Activated T-helper 2 cell treated with anti-CD3 and anti-CD28 coated beads, Interferon-gamma antibody, Interleukin-2, Interleukin-4, amounts not matched to agents 10 μg/mL and 5 μg/mL and 100 μg/mL, durations not matched to agents 14 hours and 24 hours and 36 hours (primary cell): ENCODE measurements at regions of chr15 and their contacts with region 1.

Region 1: DNA sequence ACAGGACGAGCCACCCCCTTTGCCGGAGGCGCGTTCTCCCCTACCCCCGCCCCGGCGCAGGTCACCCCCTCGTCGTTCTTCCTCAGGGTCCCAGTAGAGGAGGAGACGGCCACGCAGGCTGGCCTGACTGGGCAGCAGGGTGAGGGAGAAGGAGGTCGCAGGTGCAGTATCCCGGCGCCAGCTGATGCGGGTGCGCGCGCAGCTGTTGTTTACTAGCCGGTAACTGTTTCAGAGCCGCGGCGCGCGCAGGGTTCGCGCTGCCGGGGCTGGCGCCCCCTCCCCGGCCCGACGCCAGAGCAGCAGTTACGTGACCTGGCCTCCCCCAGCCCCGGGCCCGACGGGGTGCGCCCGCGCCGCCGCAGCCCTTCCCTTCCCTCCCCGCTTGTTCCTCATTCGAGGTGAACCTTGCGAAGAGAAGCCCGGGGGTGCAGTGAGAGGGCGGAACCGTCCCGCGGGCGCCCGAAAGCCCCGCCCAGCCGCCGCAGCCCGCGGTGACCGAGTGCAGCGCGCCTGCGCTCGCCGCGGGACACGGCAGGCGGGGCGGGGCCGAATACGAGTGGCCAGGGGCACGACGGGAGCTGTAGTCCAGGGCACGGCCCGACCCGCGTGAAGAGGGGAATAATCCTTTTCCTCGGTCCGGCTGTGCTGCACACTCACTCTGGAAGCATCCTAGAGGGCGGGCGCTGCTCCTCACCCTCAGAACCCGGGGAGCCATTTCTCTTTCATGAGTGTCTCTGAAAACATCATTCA is at the start of gene SLC12A6:
- DNase-seq: peak; percentile 88
- H3K4me3 Mint-ChIP-seq: peak within 1 kb of the TSS; percentile 98
- H3K27ac Mint-ChIP-seq: peak within 1 kb of the TSS; percentile 95
- H3K4me1 Mint-ChIP-seq: peaks cover 56% of the 10 kb centered on the region
- H3K27me3 Mint-ChIP-seq: no peaks in the 10 kb centered on the region
- total RNA-seq, gene SLC12A6: 16.6 and 17.0 TPM in 2 replicates

Region 2: DNA sequence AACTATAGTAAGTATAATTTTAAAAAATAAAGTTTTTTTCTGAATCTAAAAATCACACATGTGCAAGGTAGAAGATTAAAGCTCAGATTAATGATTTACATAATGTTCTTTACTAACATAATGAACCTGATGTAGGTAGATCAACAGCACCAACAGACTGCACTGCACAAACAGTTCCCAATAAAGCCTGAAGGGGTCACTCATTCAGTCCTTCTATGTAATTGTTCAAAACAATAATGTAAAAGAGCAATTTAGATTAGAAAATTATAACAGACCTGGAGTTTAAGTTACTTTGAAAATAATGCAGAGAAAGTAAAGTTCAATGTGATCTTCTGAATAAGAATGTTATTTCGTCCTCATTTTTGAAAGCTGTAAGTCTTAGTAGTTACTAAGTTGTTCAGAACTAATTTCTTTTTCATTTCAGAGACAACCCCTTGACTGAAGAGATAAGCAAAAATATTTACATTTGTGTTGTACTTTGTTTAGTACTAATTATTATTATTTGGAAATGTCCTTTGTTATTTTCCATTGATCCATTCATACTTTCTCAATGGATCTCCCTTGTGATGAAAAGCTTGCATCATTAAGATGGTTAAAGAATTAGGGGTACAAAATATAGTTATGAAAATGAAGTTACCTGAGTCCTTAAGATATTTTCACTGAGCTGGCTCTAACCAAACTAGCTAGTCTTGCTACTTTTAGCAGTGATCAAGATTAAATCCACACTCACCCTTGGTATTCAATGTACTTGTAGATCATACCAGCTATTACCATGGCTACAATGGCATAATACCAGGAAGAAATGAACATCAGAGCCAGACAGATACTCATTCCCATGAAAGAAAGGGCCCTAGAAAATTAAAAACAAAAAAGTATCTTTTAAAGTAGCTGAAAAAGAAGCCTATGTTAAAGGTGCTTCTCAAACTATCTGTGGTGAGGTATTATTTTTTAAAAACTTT is 96.1 kb before region 1 on chr15:
- intact Hi-C with region 1: loop called (anchors 2 kb)
- DNase-seq: no peak
- H3K4me3 Mint-ChIP-seq: no peak overlapping the region
- H3K27ac Mint-ChIP-seq: peak overlapping the region; percentile 53
- H3K4me1 Mint-ChIP-seq: peaks cover 31% of the 10 kb centered on the region
- H3K27me3 Mint-ChIP-seq: no peaks in the 10 kb centered on the region